ENCODE measurements at regions of chr12 and their contacts with region 1.

Region 1: GRCh38 chr12:32679091-32679919 is at the start of gene DNM1L:
- DNase-seq: peak; percentile 94
- H3K4me3 Mint-ChIP-seq: peak within 1 kb of the TSS; percentile 81
- H3K27ac Mint-ChIP-seq: peak within 1 kb of the TSS; percentile 82
- H3K4me1 Mint-ChIP-seq: peaks cover 24% of the 10 kb centered on the region
- H3K27me3 Mint-ChIP-seq: no peaks in the 10 kb centered on the region
- total RNA-seq, gene DNM1L: 54.4 to 61.5 TPM

Region 2: GRCh38 chr12:32273712-32274111 is 405.6 kb before region 1 on chr12:
- CTCF ChIA-PET with region 1: no interaction called
- intact Hi-C with region 1: loop called (anchors 2 kb)
- DNase-seq: peak; percentile 70
- H3K4me3 Mint-ChIP-seq: peak overlapping the region; percentile 58
- H3K27ac Mint-ChIP-seq: peak overlapping the region; percentile 91
- H3K4me1 Mint-ChIP-seq: peaks cover 19% of the 10 kb centered on the region
- H3K27me3 Mint-ChIP-seq: no peaks in the 10 kb centered on the region

Region 3: DNA sequence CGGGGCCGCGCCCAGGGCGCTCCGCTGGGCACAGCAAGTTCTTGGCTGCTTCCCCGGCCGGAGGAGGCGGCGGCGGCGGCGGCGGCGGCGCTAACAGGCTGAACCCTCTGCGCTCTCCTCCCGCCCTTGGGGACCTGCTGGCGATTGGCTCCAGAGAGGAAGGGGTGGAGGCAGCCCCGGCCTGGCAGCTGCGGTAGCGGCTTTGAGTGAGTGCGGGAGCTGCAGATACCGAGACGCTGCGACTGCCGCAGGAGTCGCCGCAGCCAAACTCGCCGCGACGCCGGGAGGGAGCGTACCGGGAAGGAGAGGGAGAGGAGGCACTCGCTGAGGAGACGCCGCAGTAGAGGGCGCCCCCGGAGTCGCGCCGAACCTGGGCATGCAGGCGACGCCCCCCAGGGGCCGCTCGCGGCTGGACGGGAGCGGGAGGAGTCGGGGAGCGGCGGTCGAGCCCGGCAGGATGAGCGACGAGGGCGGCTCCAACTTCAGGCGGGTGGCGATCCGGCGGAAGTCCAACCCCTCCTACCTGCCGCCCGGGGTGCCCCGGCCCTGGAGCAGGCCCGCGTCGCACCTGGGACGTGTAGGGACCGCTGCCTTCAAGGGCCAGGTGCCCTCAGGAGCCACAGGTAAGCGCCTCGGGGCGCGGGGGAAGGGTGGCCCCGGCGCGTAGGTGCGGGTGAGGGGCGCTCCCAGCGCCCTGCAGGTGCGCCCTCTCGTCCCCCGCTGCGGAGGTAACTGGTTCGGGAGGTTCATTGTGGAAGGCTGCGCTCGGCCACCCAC is 279.8 kb before region 1 on chr12 and contains the start of gene FGD4:
- CTCF ChIA-PET with region 1: no interaction called
- intact Hi-C with region 1: loop called (anchors 1 kb)
- DNase-seq: peak; percentile 76
- H3K4me3 Mint-ChIP-seq: peak within 1 kb of the TSS; percentile 88
- H3K27ac Mint-ChIP-seq: no peak within 1 kb of the TSS
- H3K4me1 Mint-ChIP-seq: no peaks in the 10 kb centered on the region
- H3K27me3 Mint-ChIP-seq: peaks cover 38% of the 10 kb centered on the region
- total RNA-seq, gene FGD4: 0.15 to 0.17 TPM

Region 4: DNA sequence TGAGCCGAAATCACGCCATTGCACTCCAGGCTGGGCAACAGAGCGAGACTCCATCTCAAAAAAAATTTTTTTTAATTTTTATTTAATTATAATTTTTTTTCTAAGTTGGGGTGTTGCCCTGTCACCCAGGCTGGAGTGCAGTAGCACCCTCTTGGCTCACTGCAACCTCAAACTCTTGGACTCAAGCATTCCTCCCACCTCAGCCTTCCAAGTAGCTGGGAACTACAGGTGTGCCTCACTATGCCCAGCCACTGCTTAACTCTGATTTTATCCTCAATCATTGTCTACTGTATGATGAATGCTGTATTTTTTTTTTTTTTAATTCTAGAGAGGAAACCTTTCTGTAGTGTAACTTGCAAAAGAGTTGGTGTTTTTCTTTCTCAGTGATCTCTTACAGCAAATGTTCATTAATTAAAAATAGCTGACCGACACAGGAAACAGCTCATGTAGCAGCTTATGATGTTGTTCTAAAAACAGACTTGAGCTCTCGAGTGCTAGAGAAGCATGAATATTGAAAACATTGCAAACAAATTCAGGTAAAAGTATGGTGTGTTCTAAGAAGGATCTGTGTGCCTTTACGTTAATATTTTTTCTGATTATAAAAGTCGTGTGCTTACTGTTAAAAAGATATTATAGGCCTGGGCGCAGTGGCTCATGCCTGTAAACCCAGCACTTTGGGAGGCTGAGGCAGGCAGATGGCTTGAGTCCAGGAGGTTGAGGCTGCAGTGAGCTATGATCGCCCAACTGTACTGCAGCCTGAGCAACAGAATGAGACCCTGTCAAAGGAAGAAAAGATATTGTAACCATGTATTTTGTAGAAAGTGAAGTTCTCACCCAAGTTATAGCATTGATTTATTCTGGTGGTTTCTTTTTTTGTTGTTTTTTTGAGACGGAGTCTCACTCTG is 211.1 kb before region 1 on chr12:
- CTCF ChIA-PET with region 1: no interaction called
- intact Hi-C with region 1: no loop called
- DNase-seq: no peak
- H3K4me3 Mint-ChIP-seq: no peak overlapping the region
- H3K27ac Mint-ChIP-seq: no peak overlapping the region
- H3K4me1 Mint-ChIP-seq: no peaks in the 10 kb centered on the region
- H3K27me3 Mint-ChIP-seq: no peaks in the 10 kb centered on the region

Region 5: DNA sequence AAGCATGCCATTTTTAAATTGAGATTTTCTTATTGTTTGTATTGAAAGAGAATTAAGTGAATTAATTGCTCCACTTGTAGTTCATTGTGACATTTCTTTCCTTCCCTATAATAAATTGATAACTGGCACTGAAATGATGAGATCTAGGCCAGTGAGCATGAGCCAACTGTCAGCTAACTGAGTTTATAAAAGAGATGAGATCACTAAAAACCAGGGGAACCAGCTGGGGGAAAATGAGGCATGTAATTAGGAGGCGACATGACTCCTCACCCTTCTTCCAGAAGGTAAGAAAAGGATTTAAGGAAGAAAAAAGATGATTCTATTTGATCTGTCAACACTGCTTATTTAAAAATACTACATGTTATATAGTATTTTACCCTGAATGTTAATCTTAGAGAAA is 104.7 kb before region 1 on chr12:
- CTCF ChIA-PET with region 1: no interaction called
- intact Hi-C with region 1: no loop called
- DNase-seq: no peak
- H3K4me3 Mint-ChIP-seq: no peak overlapping the region
- H3K27ac Mint-ChIP-seq: no peak overlapping the region
- H3K4me1 Mint-ChIP-seq: no peaks in the 10 kb centered on the region
- H3K27me3 Mint-ChIP-seq: peaks cover 3% of the 10 kb centered on the region

Region 6: DNA sequence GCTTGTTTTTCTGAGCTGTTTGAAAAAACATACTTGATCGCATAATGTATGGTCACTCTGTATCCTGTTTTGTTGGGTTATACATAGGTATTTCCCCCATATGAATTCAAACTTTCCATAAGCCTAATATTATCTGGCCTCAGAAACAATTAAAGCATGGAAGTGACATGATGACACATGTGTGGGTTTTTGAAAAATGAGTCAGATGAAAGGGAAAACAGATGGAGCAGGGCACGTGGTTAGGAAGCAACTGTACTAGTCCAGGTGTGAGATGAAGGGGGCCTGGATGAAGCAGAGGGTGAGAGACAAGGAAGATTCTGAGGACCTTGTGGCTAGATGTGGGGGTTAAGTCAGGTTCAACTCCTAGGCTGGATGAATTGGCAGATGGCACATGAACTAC is 92.9 kb before region 1 on chr12:
- CTCF ChIA-PET with region 1: no interaction called
- intact Hi-C with region 1: loop called (anchors 2 kb)
- DNase-seq: no peak
- H3K4me3 Mint-ChIP-seq: no peak overlapping the region
- H3K27ac Mint-ChIP-seq: no peak overlapping the region
- H3K4me1 Mint-ChIP-seq: peaks cover 48% of the 10 kb centered on the region
- H3K27me3 Mint-ChIP-seq: no peaks in the 10 kb centered on the region

Region 7: DNA sequence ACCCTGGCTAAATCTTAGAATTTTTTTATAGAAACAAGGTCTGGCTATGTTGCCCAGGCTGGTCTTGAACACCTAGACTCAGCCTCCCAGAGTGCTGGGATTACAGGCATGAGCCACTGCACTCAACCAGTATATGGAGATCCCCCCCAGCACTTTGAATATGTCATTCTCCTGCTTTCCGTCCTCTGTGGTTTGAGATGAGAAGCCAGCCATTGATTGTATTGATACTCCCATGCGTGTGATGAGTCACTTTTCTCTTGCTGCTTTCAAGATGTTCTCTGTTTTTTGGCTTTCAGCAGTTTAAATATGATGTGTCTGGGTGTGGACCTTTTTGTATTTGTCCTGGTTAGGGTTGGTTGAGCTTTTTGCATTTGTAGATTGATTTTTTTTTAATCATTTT is 75.4 kb before region 1 on chr12:
- CTCF ChIA-PET with region 1: interaction called, 7 read pairs
- intact Hi-C with region 1: loop called (anchors 1 kb)
- DNase-seq: peak; percentile 73
- H3K4me3 Mint-ChIP-seq: no peak overlapping the region
- H3K27ac Mint-ChIP-seq: peak overlapping the region; percentile 57
- H3K4me1 Mint-ChIP-seq: peaks cover 8% of the 10 kb centered on the region
- H3K27me3 Mint-ChIP-seq: no peaks in the 10 kb centered on the region

Region 8: DNA sequence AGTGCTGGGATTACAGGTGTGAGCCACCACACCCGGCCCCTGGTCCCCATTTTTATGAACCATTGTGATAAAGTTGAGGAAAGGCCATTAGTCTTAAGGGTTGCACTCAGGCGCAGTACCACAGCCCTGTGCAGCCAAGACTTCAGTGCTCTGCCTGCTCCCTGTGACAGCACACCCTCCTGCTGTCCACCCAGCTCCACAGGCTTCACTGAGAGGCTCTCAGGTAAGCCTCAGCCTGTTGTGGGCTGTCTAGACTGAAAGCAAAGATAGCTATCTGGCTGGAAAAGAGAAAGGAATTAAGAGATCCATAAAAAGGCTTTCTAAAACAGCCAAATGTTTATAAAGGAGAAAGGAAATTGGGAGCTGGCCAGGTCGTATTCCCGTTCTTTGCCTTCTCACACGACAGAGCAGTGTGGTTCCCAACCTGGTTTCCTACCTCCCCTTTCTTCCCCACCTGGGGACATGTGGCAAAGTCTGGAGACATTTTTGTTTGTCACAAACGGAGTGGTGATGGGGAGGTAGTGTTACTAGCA is 19.3 kb before region 1 on chr12:
- CTCF ChIA-PET with region 1: no interaction called
- intact Hi-C with region 1: loop called (anchors 1 kb)
- DNase-seq: no peak
- H3K4me3 Mint-ChIP-seq: no peak overlapping the region
- H3K27ac Mint-ChIP-seq: no peak overlapping the region
- H3K4me1 Mint-ChIP-seq: peaks cover 3% of the 10 kb centered on the region
- H3K27me3 Mint-ChIP-seq: no peaks in the 10 kb centered on the region

Region 9: DNA sequence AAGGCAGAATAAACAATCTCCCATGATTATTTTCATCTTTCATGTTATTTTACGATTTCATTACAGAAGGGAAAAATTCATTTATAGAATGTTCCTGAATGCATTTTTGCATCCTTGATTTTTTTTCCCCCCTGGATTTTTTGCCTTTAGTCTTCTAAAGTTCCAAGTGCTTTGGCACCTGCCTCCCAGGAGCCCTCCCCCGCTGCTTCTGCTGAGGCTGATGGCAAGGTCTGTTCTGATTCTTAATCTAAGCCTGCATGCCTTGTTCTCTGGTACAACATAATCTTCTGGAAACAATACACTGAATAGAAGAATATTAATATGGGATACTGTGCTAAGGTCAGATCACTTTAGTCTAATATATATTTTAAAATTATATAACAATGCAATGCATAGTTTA is 58.4 kb after region 1 on chr12:
- CTCF ChIA-PET with region 1: no interaction called
- intact Hi-C with region 1: no loop called
- DNase-seq: no peak
- H3K4me3 Mint-ChIP-seq: no peak overlapping the region
- H3K27ac Mint-ChIP-seq: no peak overlapping the region
- H3K4me1 Mint-ChIP-seq: peaks cover 2% of the 10 kb centered on the region
- H3K27me3 Mint-ChIP-seq: no peaks in the 10 kb centered on the region

Measured in activated naive CD4-positive, alpha-beta T cell treated with anti-CD3 and anti-CD28 coated beads for 36 hours (primary cell).